CD8-positive, alpha-beta T cell (primary cell): ENCODE measurements at regions of chr4 and their contacts with region 1.

Region 1: DNA sequence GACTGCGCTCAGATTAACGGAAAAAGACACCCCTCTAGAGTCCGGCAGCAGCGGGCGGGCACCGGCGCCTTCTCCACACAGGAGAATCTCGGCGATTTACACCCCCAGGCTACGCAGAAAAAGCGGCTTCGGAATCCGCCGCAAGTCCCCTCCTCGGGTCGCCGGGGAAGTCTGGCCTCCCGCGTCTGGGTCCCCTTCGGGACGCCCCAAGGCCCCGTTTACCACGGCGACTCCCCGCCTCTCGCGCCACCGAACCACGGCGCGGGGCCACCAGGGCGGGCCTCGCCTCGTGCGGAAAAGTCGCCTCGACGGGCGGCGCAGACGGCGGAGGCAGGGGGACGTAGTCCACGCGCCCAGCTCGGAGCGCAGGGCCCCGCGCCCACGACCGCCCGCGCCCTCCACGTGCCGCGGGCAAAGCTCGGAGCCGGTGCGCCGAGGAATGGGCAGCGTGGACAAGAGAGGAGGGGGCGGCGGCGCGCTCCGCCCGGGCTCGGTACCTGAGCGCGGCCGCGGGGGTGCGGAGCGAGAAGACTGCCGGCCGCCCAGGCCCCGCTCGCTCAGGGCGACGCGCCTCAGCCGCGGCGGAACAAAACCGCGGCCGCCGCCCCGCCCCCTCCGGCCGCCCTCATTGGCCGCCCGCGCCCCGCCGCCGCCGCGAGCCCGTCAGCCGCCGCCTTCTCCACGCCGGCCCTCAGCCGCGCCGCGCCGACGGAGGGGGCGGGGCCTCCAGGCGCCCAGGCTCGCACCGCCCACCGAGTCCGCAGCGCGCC is at the start of gene FAM53A:
- DNase-seq: peak in 7 of 9 experiments; percentile 7 to 95 (median 43)
- ATAC-seq: peak; percentile 94
- H3K4me3 ChIP-seq: peak within 1 kb of the TSS; percentile 42 to 43
- H3K4me3 Mint-ChIP-seq: peak within 1 kb of the TSS; percentile 89
- H3K27ac ChIP-seq: peak within 1 kb of the TSS in 1 of 2 experiments; percentile 4
- H3K27ac Mint-ChIP-seq: peak within 1 kb of the TSS; percentile 81
- H3K4me1 ChIP-seq: no peaks in the 10 kb centered on the region
- H3K4me1 Mint-ChIP-seq: peaks cover 12% of the 10 kb centered on the region
- H3K27me3 ChIP-seq: no peaks in the 10 kb centered on the region
- H3K27me3 Mint-ChIP-seq: no peaks in the 10 kb centered on the region
- CTCF ChIP-seq: no peak
- total RNA-seq, gene FAM53A: 1.8 to 1.9 TPM

Region 2: DNA sequence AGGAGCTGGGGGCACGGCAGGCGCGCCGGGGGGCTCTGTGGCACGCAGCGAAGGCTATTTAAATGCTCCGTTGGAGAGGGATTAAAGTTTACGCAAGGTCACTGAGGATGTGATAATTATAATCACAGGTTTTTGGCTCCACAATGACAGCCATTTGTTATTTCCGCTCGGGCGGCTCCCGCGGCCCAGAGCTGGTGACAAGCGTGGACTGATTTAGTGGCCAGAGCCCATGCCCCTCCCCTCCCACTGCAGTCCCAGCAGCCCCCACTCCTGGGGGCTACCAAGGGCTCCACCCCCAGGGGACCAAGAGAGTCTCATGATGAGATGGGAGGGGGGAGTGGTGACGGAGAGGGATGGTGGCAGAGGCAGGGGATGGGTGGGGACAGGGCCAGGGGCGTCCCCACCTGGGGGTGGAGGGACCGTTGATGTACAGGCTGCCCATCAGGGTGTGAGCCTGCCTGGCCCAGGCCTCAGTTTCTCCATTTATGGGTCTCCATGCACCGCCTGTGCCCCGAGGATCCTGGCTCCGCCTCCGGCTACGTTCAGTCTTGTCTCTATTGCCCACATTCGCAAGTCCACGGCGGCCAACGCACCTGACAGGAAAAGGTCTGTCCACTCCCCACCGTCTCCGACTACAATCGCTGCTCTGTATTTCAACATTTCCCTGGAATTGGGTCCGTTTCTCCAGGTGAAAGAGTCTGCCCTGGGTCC is 181.6 kb before region 1 on chr4:
- CTCF ChIA-PET with region 1: no interaction called
- POLR2A ChIA-PET with region 1: no interaction called
- intact Hi-C with region 1: no loop called
- DNase-seq: peak in 1 of 9 experiments; percentile 2
- ATAC-seq: no peak
- H3K4me3 ChIP-seq: no peak overlapping the region
- H3K4me3 Mint-ChIP-seq: no peak overlapping the region
- H3K27ac ChIP-seq: no peak overlapping the region
- H3K27ac Mint-ChIP-seq: no peak overlapping the region
- H3K4me1 ChIP-seq: no peaks in the 10 kb centered on the region
- H3K4me1 Mint-ChIP-seq: no peaks in the 10 kb centered on the region
- H3K27me3 ChIP-seq: no peaks in the 10 kb centered on the region
- H3K27me3 Mint-ChIP-seq: peaks cover 7% of the 10 kb centered on the region
- CTCF ChIP-seq: no peak

Region 3: DNA sequence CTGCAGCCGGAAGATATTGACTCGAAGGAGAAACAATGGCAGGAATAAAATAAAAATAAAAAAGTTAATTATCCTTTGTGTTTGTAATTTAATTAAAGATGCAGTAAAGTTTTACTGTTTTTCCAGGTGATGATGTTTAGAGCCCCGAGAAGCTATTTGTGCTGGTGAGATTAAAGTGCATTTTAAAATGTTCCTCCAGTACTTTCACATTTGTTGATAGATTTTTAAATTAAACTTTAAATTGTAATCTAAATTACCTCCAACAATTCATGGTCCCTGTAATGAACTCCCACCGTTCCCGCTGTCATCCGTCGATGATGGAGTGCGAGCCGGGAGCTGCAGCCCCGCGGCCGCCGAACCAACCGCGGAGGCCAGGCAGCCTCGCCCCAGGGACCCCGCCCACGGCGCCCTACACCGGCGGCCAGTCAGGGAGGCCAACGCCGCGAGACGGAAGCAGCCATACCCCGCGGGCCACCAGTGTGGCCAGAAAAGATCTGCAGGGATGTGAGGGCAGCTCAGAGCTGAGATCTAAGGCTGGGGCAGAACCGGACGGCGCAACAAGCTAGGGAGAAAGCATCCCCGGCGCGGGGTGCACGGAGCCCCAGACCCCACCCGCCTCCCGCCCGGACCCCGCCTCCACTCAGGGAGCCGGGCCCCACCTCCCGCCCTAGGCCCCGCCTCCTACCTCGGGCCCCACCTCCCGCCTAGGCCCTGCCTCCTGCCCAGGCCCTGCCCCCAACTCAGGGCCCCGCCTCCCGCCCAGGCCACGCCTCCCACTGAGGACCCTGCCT is 103.8 kb before region 1 on chr4:
- CTCF ChIA-PET with region 1: interaction called, 3 read pairs
- POLR2A ChIA-PET with region 1: no interaction called
- intact Hi-C with region 1: loop called (anchors 5 to 10 kb)
- DNase-seq: peak; percentile 83 to 96 (median 93)
- ATAC-seq: peak; percentile 82
- H3K4me3 ChIP-seq: peak overlapping the region; percentile 70 to 78
- H3K4me3 Mint-ChIP-seq: peak overlapping the region; percentile 79
- H3K27ac ChIP-seq: peak overlapping the region; percentile 66 to 73
- H3K27ac Mint-ChIP-seq: peak overlapping the region; percentile 79
- H3K4me1 ChIP-seq: no peaks in the 10 kb centered on the region
- H3K4me1 Mint-ChIP-seq: peaks cover 11% of the 10 kb centered on the region
- H3K27me3 ChIP-seq: no peaks in the 10 kb centered on the region
- H3K27me3 Mint-ChIP-seq: no peaks in the 10 kb centered on the region
- CTCF ChIP-seq: no peak

Region 4: GRCh38 chr4:1721004-1721665 is 37.2 kb after region 1 on chr4 and contains the starts of genes TACC3 and TMEM129:
- CTCF ChIA-PET with region 1: interaction called, 509 read pairs
- POLR2A ChIA-PET with region 1: interaction called, 4 read pairs
- intact Hi-C with region 1: loop called (anchors 1 to 2 kb)
- DNase-seq: peak; percentile 89 to 98 (median 94)
- ATAC-seq: peak; percentile 82
- H3K4me3 ChIP-seq: peak within 1 kb of the TSS; percentile 54 to 74
- H3K4me3 Mint-ChIP-seq: peak within 1 kb of the TSS; percentile 86
- H3K27ac ChIP-seq: peak within 1 kb of the TSS; percentile 85 to 86
- H3K27ac Mint-ChIP-seq: peak within 1 kb of the TSS; percentile 100
- H3K4me1 ChIP-seq: peaks cover 56% of the 10 kb centered on the region
- H3K4me1 Mint-ChIP-seq: peaks cover 49% of the 10 kb centered on the region
- H3K27me3 ChIP-seq: no peaks in the 10 kb centered on the region
- H3K27me3 Mint-ChIP-seq: no peaks in the 10 kb centered on the region
- CTCF ChIP-seq: no peak
- total RNA-seq, gene TACC3: 131 to 137 TPM
- total RNA-seq, gene TMEM129: 14.5 to 14.8 TPM

Region 5: GRCh38 chr4:1870578-1871443 is 186.9 kb after region 1 on chr4 and contains the start of gene NSD2:
- CTCF ChIA-PET with region 1: no interaction called
- POLR2A ChIA-PET with region 1: no interaction called
- intact Hi-C with region 1: loop called in 1 of 2 experiments (anchors 5 kb)
- DNase-seq: peak; percentile 81 to 97 (median 88)
- ATAC-seq: peak; percentile 64
- H3K4me3 ChIP-seq: peak within 1 kb of the TSS; percentile 66 to 98
- H3K4me3 Mint-ChIP-seq: peak within 1 kb of the TSS; percentile 83
- H3K27ac ChIP-seq: peak within 1 kb of the TSS; percentile 81 to 98
- H3K27ac Mint-ChIP-seq: peak within 1 kb of the TSS; percentile 89
- H3K4me1 ChIP-seq: peaks cover 21% of the 10 kb centered on the region
- H3K4me1 Mint-ChIP-seq: peaks cover 31% of the 10 kb centered on the region
- H3K27me3 ChIP-seq: no peaks in the 10 kb centered on the region
- H3K27me3 Mint-ChIP-seq: no peaks in the 10 kb centered on the region
- CTCF ChIP-seq: no peak
- total RNA-seq, gene NSD2: 27.3 to 32.5 TPM